Endothelial cell of umbilical vein (primary cell): ENCODE measurements at regions of chr13 and their contacts with region 1.

Region 1: DNA sequence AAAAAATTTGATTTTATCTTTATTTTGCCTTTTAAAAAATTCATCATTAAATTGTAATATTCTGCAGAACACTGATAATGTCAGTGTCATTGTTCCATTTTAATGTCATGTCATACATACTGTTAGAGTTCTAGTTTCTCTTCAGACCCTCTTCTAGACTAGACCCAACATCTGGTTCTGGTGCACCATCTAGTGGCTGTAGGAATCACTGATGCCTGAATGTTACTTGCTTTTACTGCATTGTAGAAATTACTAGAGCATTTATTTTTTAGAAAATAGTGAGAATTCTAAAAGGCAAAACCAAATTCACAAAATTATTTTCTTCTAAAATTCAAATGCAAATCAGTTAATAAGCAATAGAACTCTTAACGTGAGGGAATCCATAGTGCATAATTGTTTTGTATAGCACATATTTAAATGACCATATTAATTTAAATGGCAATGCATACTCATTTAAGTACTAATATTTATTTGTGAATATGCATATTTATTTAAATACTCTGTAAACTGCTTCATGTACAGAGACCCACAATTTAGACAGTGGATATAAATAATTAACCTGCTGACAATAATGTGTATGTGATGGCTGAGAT is 425.7 kb downstream of the KLF12 start:
- DNase-seq: peak; percentile 71
- H3K4me3 ChIP-seq: no peak overlapping the region
- H3K27ac ChIP-seq: no peak overlapping the region
- H3K4me1 ChIP-seq: no peaks in the 10 kb centered on the region
- H3K27me3 ChIP-seq: no peaks in the 10 kb centered on the region
- CTCF ChIP-seq: peak; percentile 61 to 66
- POLR2A ChIP-seq: no peak

Region 2: GRCh38 chr13:72808917-72809500 is 899.5 kb before region 1 on chr13:
- CTCF ChIA-PET with region 1: interaction called, 6 read pairs
- POLR2A ChIA-PET with region 1: no interaction called
- dilution Hi-C with region 1: no loop called
- intact Hi-C with region 1: loop called (anchors 1 kb)
- DNase-seq: peak; percentile 25
- H3K4me3 ChIP-seq: no peak overlapping the region
- H3K27ac ChIP-seq: no peak overlapping the region
- H3K4me1 ChIP-seq: no peaks in the 10 kb centered on the region
- H3K27me3 ChIP-seq: no peaks in the 10 kb centered on the region
- CTCF ChIP-seq: peak in 1 of 2 donors; percentile 14
- POLR2A ChIP-seq: no peak

Region 3: GRCh38 chr13:72839831-72840426 is 868.6 kb before region 1 on chr13:
- CTCF ChIA-PET with region 1: interaction called, 14 read pairs
- POLR2A ChIA-PET with region 1: no interaction called
- dilution Hi-C with region 1: no loop called
- intact Hi-C with region 1: loop called (anchors 1 kb)
- DNase-seq: peak; percentile 45
- H3K4me3 ChIP-seq: no peak overlapping the region
- H3K27ac ChIP-seq: no peak overlapping the region
- H3K4me1 ChIP-seq: no peaks in the 10 kb centered on the region
- H3K27me3 ChIP-seq: no peaks in the 10 kb centered on the region
- CTCF ChIP-seq: peak; percentile 69 to 75
- POLR2A ChIP-seq: no peak

Region 4: GRCh38 chr13:73578251-73578875 is 130.1 kb before region 1 on chr13:
- CTCF ChIA-PET with region 1: no interaction called
- POLR2A ChIA-PET with region 1: no interaction called
- dilution Hi-C with region 1: no loop called
- intact Hi-C with region 1: no loop called
- DNase-seq: no peak
- H3K4me3 ChIP-seq: no peak overlapping the region
- H3K27ac ChIP-seq: no peak overlapping the region
- H3K4me1 ChIP-seq: no peaks in the 10 kb centered on the region
- H3K27me3 ChIP-seq: no peaks in the 10 kb centered on the region
- CTCF ChIP-seq: no peak
- POLR2A ChIP-seq: no peak

Region 5: GRCh38 chr13:73593199-73593765 is 115.2 kb before region 1 on chr13:
- CTCF ChIA-PET with region 1: no interaction called
- POLR2A ChIA-PET with region 1: no interaction called
- dilution Hi-C with region 1: no loop called
- intact Hi-C with region 1: no loop called
- DNase-seq: no peak
- H3K4me3 ChIP-seq: no peak overlapping the region
- H3K27ac ChIP-seq: no peak overlapping the region
- H3K4me1 ChIP-seq: no peaks in the 10 kb centered on the region
- H3K27me3 ChIP-seq: no peaks in the 10 kb centered on the region
- CTCF ChIP-seq: no peak
- POLR2A ChIP-seq: no peak